Naive thymus-derived CD4-positive, alpha-beta T cell (primary cell): ENCODE measurements at regions of chr3 and their contacts with region 1.

Region 1: DNA sequence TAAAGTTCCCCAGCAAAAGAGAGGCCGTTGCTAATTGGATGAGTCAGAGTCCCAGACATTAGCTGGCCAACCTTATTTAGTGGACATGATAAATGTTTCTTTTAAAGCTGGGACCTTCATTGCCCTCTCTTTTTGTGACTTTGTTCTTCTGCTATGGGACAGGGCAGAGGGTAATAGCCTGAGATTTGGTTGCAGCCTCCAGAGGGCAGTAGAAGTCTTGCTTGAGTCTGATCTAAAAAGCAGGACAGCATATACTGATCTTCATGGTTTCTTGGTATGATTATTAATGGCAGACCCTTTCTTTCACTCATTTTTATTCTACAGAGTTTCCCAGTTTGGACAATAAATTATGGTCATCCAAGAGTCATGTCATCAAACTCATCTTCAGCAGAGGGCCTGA is 25.1 kb upstream of the ZKSCAN7 start:
- DNase-seq: peak in 1 of 9 donors; percentile 15
- ATAC-seq: no peak
- H3K4me3 ChIP-seq: no peak overlapping the region
- H3K4me3 Mint-ChIP-seq: no peak overlapping the region
- H3K27ac ChIP-seq: no peak overlapping the region
- H3K27ac Mint-ChIP-seq: no peak overlapping the region
- H3K4me1 ChIP-seq: no peaks in the 10 kb centered on the region
- H3K4me1 Mint-ChIP-seq: peaks cover 0 to 2% (median 0%) of the 10 kb centered on the region in 7 donors
- H3K27me3 ChIP-seq: no peaks in the 10 kb centered on the region
- H3K27me3 Mint-ChIP-seq: peaks cover 9 to 30% (median 15%) of the 10 kb centered on the region in 5 donors

Region 2: DNA sequence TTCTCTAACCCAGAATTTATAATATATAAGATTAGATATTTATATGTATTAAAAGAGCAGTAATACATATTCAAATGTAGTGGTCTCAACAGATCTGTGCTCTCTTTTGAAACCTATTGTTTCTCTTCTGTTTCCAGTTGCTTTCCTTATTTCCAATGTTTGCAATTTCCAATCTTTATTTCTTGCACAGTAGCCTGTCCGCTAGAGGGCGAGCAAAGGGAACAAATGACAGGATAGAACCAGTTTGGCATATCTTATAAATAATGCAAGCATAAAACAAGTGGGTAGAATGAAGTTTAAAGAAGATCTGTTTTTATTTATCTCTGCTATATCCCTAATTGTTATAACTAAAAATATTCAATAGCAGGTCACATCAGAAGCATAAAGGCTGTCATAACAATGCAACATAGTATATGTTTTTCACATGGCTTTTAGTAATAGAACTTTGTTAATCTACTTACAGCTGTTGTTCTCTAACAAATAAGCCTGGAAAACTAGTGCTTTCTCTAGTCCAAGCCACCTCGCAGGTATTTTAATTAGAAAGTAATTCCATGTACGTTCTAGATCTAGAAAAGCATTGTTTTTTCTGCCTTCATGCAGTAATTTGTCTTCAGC is 206.5 kb before region 1 on chr3:
- CTCF ChIA-PET with region 1: no interaction called
- POLR2A ChIA-PET with region 1: no interaction called
- intact Hi-C with region 1: loop called in 1 of 2 experiments (anchors 1 kb)
- DNase-seq: peak in 8 of 9 donors; percentile 20 to 60 (median 41)
- ATAC-seq: peak; percentile 69
- H3K4me3 ChIP-seq: no peak overlapping the region
- H3K4me3 Mint-ChIP-seq: no peak overlapping the region
- H3K27ac ChIP-seq: no peak overlapping the region
- H3K27ac Mint-ChIP-seq: no peak overlapping the region
- H3K4me1 ChIP-seq: no peaks in the 10 kb centered on the region
- H3K4me1 Mint-ChIP-seq: peaks cover 0 to 3% (median 0%) of the 10 kb centered on the region in 7 donors
- H3K27me3 ChIP-seq: no peaks in the 10 kb centered on the region
- H3K27me3 Mint-ChIP-seq: peaks cover 6 to 37% (median 11%) of the 10 kb centered on the region in 5 donors

Region 3: DNA sequence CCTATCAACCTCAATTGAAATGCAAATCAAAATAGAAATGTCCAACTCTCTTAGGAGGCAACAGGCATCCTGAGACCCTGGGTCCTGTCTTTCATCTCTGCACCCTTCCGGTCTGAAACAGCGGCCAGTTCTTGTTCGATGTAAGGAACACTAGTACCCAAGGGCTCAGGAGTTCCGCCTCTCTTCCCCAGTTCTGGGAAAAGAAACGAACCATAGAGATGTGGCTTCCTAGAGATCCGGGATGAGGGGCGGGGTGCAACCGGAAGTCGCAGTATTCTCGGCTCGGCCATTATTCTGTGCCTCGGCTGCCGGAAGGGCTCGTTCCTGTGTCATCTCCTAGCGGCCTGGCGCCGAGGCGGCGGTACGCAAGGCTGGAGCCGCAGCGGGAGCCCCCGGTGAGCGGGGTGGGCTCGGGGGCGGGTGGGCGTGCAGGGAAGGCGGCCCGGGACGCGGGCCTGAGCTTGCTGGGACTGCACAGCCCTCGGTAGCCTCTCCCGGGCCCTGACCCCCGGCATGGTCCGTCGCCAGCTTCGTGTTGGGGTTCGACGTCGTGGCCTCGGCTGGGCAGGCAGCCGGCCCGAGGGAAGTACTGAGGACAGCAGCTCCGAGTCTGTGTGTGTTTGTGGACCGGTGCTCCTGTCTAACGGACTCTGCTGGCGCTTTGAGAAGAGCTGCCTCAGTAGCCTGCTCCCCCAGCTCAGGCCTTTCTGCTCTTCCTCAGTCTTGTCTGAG is 95.0 kb after region 1 on chr3 and contains the start of gene ZNF197:
- CTCF ChIA-PET with region 1: no interaction called
- POLR2A ChIA-PET with region 1: no interaction called
- intact Hi-C with region 1: loop called in 1 of 2 experiments (anchors 10 kb)
- DNase-seq: peak; percentile 5 to 64 (median 27)
- ATAC-seq: peak; percentile 80
- H3K4me3 ChIP-seq: peak within 1 kb of the TSS; percentile 51
- H3K4me3 Mint-ChIP-seq: peak within 1 kb of the TSS; percentile 83 to 94 (median 92)
- H3K27ac ChIP-seq: peak within 1 kb of the TSS; percentile 66
- H3K27ac Mint-ChIP-seq: peak within 1 kb of the TSS; percentile 60 to 88 (median 81)
- H3K4me1 ChIP-seq: peaks cover 9 to 10% of the 10 kb centered on the region in 2 donors
- H3K4me1 Mint-ChIP-seq: peaks cover 18 to 53% (median 47%) of the 10 kb centered on the region in 7 donors
- H3K27me3 ChIP-seq: no peaks in the 10 kb centered on the region
- H3K27me3 Mint-ChIP-seq: no peaks in the 10 kb centered on the region
- total RNA-seq, gene ZNF197: 5.5 to 15.6 (median 15.0) TPM

Region 4: GRCh38 chr3:44861412-44862220 is 331.7 kb after region 1 on chr3 and contains the start of gene TMEM42:
- CTCF ChIA-PET with region 1: no interaction called
- POLR2A ChIA-PET with region 1: no interaction called
- intact Hi-C with region 1: loop called in 1 of 2 experiments (anchors 2 kb)
- DNase-seq: peak; percentile 81 to 89 (median 84)
- ATAC-seq: peak; percentile 97
- H3K4me3 ChIP-seq: peak within 1 kb of the TSS; percentile 78
- H3K4me3 Mint-ChIP-seq: peak within 1 kb of the TSS; percentile 88 to 92 (median 91)
- H3K27ac ChIP-seq: peak within 1 kb of the TSS; percentile 76
- H3K27ac Mint-ChIP-seq: peak within 1 kb of the TSS; percentile 86 to 97 (median 92)
- H3K4me1 ChIP-seq: peaks cover 15 to 29% of the 10 kb centered on the region in 2 donors
- H3K4me1 Mint-ChIP-seq: peaks cover 23 to 48% (median 43%) of the 10 kb centered on the region in 7 donors
- H3K27me3 ChIP-seq: no peaks in the 10 kb centered on the region
- H3K27me3 Mint-ChIP-seq: no peaks in the 10 kb centered on the region
- total RNA-seq, gene TMEM42: 12.1 to 25.1 (median 16.4) TPM

Region 5: DNA sequence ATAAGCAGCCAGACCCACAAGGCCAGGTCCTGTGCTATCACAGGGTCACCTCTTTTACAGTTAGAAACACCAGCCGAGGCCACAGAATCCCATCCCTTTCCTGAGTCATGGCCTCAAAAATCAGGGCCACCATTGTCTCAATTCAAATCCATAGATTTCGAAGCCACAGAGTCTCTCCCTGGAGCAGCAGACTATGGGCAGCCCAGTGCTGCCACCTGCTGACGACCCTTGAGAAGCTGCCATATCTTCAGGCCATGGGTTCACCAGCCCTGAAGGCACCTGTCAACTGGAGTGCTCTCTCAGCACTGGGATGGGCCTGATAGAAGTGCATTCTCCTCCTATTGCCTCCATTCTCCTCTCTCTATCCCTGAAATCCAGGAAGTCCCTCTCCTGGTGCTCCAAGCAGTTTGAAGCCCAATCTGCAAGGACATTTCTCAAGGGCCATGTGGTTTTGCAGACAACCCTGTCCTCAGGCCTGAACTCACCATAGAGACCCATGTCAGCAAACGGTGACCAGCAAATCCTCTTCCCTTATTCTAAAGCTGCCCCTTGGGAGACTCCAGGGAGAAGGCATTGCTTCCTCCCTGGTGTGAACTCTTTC is 384.0 kb after region 1 on chr3:
- CTCF ChIA-PET with region 1: interaction called, 32 read pairs
- POLR2A ChIA-PET with region 1: no interaction called
- intact Hi-C with region 1: loop called (anchors 1 kb)
- DNase-seq: peak; percentile 27 to 69 (median 53)
- ATAC-seq: peak; percentile 70
- H3K4me3 ChIP-seq: no peak overlapping the region
- H3K4me3 Mint-ChIP-seq: no peak overlapping the region
- H3K27ac ChIP-seq: no peak overlapping the region
- H3K27ac Mint-ChIP-seq: no peak overlapping the region
- H3K4me1 ChIP-seq: no peaks in the 10 kb centered on the region
- H3K4me1 Mint-ChIP-seq: peaks cover 0 to 4% (median 0%) of the 10 kb centered on the region in 7 donors
- H3K27me3 ChIP-seq: no peaks in the 10 kb centered on the region
- H3K27me3 Mint-ChIP-seq: peaks cover 13 to 19% (median 14%) of the 10 kb centered on the region in 5 donors

Region 6: GRCh38 chr3:45499529-45499928 is 969.6 kb after region 1 on chr3:
- CTCF ChIA-PET with region 1: no interaction called
- POLR2A ChIA-PET with region 1: no interaction called
- intact Hi-C with region 1: loop called in 1 of 2 experiments (anchors 10 kb)
- DNase-seq: peak in 3 of 9 donors; percentile 19 to 33 (median 23)
- ATAC-seq: no peak
- H3K4me3 ChIP-seq: no peak overlapping the region
- H3K4me3 Mint-ChIP-seq: no peak overlapping the region
- H3K27ac ChIP-seq: no peak overlapping the region
- H3K27ac Mint-ChIP-seq: peak overlapping the region in 2 of 9 donors; percentile 47 to 76
- H3K4me1 ChIP-seq: peaks cover 0 to 26% of the 10 kb centered on the region in 2 donors
- H3K4me1 Mint-ChIP-seq: peaks cover 5 to 32% (median 25%) of the 10 kb centered on the region in 7 donors
- H3K27me3 ChIP-seq: no peaks in the 10 kb centered on the region
- H3K27me3 Mint-ChIP-seq: no peaks in the 10 kb centered on the region